IMR-90 (cell line): ENCODE measurements at regions of chr18 and their contacts with region 1.

Region 1: DNA sequence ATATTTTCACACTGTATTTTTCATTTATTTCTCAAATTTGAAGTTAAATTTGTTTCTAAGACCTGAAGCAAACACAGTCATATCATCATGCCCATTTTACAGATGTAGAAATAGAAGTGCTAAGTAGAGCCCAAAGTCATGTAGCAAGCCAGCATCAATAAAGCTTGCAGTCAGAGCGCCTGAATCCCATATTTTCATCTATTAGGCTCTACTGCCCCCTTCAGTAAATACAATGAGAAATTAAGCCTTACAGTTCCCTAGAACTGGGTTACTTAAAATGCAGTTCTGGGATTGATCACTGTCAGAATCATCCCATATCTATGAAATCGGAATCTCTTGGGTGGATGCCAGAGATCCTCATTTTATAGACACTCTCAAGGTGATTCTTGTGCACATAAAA is 419.9 kb downstream of the TGIF1 start:
- DNase-seq: peak; percentile 76
- ATAC-seq: peak; percentile 87
- H3K4me3 ChIP-seq: no peak overlapping the region
- H3K27ac ChIP-seq: no peak overlapping the region
- H3K4me1 ChIP-seq: no peaks in the 10 kb centered on the region
- H3K27me3 ChIP-seq: peaks cover 3% of the 10 kb centered on the region; the same call in 1 of the 2 replicates
- CTCF ChIP-seq: peak; percentile 71
- POLR2A ChIP-seq: no peak
- RAD21 ChIP-seq: peak; percentile 83

Region 2: GRCh38 chr18:3665780-3666525 is 203.9 kb before region 1 on chr18:
- CTCF ChIA-PET with region 1: interaction called, 11 read pairs
- POLR2A ChIA-PET with region 1: no interaction called
- dilution Hi-C with region 1: no loop called
- in situ Hi-C with region 1: no loop called
- intact Hi-C with region 1: no loop called
- DNase-seq: peak; percentile 91
- ATAC-seq: peak; percentile 96
- H3K4me3 ChIP-seq: no peak overlapping the region
- H3K27ac ChIP-seq: peak overlapping the region; percentile 72
- H3K4me1 ChIP-seq: peaks cover 7% of the 10 kb centered on the region
- H3K27me3 ChIP-seq: no peaks in the 10 kb centered on the region
- CTCF ChIP-seq: peak; percentile 94
- POLR2A ChIP-seq: no peak
- RAD21 ChIP-seq: peak; percentile 99

Region 3: DNA sequence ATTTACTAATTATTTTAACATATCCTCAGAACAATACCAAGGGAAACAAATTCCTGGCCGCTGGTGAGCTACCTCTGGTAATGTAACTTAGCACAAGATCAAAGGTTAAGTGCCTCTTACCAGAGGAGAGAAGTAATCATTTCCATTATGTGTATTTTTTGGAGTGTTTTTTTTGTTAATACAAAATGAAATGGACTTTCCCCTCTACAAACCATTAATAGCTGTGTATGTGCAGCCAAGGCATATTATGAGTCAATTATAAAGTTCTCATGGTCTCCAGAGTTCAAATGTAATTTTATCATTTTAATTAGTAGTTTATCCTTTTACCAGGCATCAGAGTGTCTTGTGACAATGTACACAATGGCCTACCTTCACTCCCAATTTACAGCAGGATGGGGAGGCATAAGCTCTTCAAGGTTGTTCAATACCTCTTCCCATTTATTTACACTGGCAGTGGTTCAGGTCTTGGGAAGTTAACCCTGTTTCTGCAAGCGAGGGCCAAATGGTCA is 177.7 kb before region 1 on chr18:
- CTCF ChIA-PET with region 1: no interaction called
- POLR2A ChIA-PET with region 1: no interaction called
- dilution Hi-C with region 1: no loop called
- in situ Hi-C with region 1: no loop called
- intact Hi-C with region 1: no loop called
- DNase-seq: no peak
- ATAC-seq: no peak
- H3K4me3 ChIP-seq: no peak overlapping the region
- H3K27ac ChIP-seq: no peak overlapping the region
- H3K4me1 ChIP-seq: peaks cover 9% of the 10 kb centered on the region
- H3K27me3 ChIP-seq: no peaks in the 10 kb centered on the region
- CTCF ChIP-seq: no peak
- POLR2A ChIP-seq: no peak
- RAD21 ChIP-seq: no peak

Region 4: GRCh38 chr18:3803028-3803749 is 66.7 kb before region 1 on chr18:
- CTCF ChIA-PET with region 1: no interaction called
- POLR2A ChIA-PET with region 1: no interaction called
- dilution Hi-C with region 1: no loop called
- in situ Hi-C with region 1: no loop called
- intact Hi-C with region 1: no loop called
- DNase-seq: no peak
- ATAC-seq: no peak
- H3K4me3 ChIP-seq: no peak overlapping the region
- H3K27ac ChIP-seq: no peak overlapping the region
- H3K4me1 ChIP-seq: no peaks in the 10 kb centered on the region; the same call in 1 of the 2 replicates
- H3K27me3 ChIP-seq: no peaks in the 10 kb centered on the region; the same call in 1 of the 2 replicates
- CTCF ChIP-seq: no peak
- POLR2A ChIP-seq: no peak
- RAD21 ChIP-seq: no peak

Region 5: DNA sequence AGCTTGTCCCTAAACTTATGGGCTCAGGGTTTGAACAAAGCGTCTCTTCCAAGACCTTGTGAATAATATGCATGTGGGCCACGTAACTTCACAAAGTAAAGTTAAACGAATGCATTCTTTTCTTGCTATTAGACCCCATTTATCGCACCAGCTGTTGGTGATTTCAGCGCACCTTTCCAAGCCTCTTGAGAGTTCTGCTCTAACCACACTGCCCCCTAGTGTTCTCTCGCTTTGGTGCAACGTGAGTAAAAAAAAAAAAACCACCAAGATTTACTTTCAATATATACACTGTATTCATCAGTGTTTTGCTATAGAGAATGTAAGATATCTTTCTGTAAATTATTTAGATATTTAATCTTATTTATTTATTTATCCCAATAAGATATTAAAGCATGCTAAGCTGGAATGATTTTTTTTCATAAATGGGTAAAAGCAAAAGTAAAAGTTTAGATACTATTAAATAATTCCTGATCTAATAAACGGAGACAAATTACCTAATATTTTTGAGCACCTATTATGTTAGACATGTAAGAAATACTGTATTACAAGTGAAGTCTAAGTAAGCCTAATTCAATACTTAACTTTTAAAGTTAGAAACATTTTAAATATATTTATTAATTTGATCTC is 125.7 kb after region 1 on chr18:
- CTCF ChIA-PET with region 1: interaction called, 9 read pairs
- POLR2A ChIA-PET with region 1: no interaction called
- dilution Hi-C with region 1: no loop called
- in situ Hi-C with region 1: no loop called
- intact Hi-C with region 1: loop called (anchors 1 kb)
- DNase-seq: peak; percentile 82
- ATAC-seq: peak; percentile 72
- H3K4me3 ChIP-seq: no peak overlapping the region
- H3K27ac ChIP-seq: no peak overlapping the region
- H3K4me1 ChIP-seq: no peaks in the 10 kb centered on the region
- H3K27me3 ChIP-seq: no peaks in the 10 kb centered on the region
- CTCF ChIP-seq: peak; percentile 80
- POLR2A ChIP-seq: no peak
- RAD21 ChIP-seq: peak; percentile 76

Region 6: GRCh38 chr18:4068552-4069158 is 198.8 kb after region 1 on chr18:
- CTCF ChIA-PET with region 1: no interaction called
- POLR2A ChIA-PET with region 1: no interaction called
- dilution Hi-C with region 1: no loop called
- in situ Hi-C with region 1: no loop called
- intact Hi-C with region 1: loop called (anchors 5 kb)
- DNase-seq: peak; percentile 56
- ATAC-seq: peak; percentile 91
- H3K4me3 ChIP-seq: no peak overlapping the region
- H3K27ac ChIP-seq: no peak overlapping the region
- H3K4me1 ChIP-seq: no peaks in the 10 kb centered on the region
- H3K27me3 ChIP-seq: no peaks in the 10 kb centered on the region
- CTCF ChIP-seq: peak; percentile 61
- POLR2A ChIP-seq: no peak
- RAD21 ChIP-seq: peak; percentile 55